HEK293 (cell line): ENCODE measurements at regions of chr19 and their contacts with region 1.

Region 1: DNA sequence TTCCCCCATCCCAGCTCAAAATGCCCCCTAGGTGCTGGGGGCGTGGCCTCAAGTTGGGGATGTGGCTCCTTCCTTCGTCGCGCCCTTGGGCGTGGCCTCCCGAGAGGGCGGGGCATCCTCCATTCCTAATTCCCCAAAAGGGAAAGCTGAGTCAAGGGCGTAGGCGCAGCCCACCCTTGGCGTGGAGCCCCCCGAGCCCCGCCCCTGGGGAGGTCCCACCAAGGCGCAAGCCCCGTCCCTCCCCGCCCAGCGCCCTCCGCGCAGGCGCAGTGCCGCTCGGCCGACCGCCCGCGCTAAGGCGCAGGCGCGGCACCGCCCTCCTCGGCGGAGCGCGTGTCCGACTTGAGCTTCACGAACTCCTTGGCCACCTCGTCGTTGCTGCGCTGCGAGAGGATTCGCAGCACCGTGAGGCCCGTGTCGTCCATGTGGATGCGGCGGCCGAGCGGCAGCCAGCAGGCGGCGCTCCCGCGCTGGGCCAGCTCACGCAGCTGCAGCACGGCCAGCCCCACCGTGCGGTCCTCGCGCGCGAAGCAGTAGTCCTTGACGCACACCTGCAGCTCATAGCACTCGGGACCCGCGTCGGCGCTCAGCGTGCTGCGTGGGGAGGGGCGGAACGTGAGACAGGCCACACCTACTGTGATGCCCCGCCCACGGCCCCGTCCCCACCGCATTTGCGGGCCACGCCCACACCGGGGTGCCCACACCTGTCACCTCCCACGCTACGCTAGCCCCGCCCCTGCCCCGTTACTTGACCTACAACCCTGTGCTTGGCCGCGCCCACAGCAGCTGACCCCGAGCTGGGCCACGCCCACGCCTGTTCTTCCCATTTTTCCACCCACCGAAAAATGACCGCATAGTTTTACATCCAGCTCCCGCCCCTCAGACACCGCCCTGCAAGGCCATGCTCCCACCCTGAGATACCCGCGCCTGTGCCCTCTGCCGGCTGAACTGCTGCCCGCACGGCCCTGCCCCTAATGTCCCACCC is 50.6 kb downstream of the COLGALT1 start:
- H3K4me3 ChIP-seq: peak overlapping the region; percentile 43
- H3K27ac ChIP-seq: peak overlapping the region; percentile 78; the same call in 1 of the 2 replicates
- H3K4me1 ChIP-seq: no peaks in the 10 kb centered on the region
- CTCF ChIP-seq: peak; percentile 98

Region 2: DNA sequence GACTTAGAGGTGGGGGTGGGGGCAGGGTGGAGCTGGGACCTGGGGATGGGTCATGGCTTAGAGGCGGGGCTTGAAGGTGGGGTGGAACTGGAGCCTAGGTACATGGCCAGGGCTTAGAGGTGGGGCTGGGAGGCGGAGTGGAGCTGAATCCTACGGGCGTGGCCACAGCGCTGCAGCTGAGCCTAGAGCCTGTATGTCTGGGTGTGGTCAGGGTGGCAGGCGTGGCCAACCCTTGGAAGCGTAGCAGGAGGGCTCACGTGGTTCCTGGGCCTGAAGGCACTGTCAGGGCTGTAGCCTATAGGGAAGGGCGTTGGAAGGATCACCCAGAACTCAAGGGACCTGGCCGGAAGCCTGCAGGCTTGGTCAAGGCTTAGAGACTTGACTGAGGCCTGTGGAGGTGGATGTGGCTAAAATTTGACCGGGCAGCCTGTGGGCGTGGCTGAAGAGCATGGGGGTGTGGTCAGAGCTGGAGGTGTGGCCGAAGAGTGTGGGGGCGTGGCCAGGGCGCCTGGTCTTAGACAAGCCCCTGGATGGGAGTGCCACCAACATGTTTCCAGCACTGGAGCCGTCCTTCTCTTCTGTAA is 26.3 kb before region 1 on chr19:
- CTCF ChIA-PET with region 1: interaction called, 5 read pairs
- POLR2A ChIA-PET with region 1: interaction called, 12 read pairs
- H3K4me3 ChIP-seq: no peak overlapping the region
- H3K27ac ChIP-seq: no peak overlapping the region
- H3K4me1 ChIP-seq: no peaks in the 10 kb centered on the region
- CTCF ChIP-seq: no peak

Region 3: DNA sequence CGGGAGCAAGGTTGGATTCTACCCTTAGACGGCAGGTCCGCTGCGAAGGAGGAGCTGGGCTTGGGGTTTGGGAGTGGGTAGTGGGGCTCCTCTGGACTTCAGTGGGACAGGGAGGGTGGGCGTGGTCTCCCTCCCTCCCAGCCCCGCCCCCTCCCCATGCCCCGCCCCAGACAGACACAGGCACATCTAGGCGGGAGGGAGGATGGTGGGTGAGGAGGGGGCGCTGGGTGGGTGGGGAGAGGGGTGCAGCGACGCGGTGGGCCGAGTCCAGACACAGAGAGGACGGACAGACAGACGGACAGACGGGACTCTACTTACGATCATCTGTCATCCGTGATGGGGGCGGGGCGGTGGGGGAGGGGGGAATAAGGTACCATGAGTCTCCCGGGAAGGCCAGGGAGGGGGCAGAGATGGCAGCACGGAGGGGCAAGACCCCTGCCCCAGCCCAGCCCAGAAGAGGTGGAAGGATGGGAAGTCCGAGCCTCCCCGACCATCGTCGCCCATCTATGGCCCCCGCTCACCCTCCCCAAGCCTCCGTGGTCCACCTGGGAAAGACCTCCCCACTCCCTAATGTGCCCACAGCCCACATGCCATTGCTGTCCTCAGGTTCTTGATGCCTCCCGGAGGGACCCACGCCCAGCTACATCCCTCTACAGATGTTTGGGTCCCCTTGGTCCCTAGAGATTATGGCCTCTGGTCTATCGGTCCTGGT is 17.3 kb after region 1 on chr19:
- CTCF ChIA-PET with region 1: interaction called, 31 read pairs
- POLR2A ChIA-PET with region 1: interaction called, 3 read pairs
- H3K4me3 ChIP-seq: no peak overlapping the region
- H3K27ac ChIP-seq: no peak overlapping the region
- H3K4me1 ChIP-seq: no peaks in the 10 kb centered on the region
- CTCF ChIP-seq: no peak

Region 4: DNA sequence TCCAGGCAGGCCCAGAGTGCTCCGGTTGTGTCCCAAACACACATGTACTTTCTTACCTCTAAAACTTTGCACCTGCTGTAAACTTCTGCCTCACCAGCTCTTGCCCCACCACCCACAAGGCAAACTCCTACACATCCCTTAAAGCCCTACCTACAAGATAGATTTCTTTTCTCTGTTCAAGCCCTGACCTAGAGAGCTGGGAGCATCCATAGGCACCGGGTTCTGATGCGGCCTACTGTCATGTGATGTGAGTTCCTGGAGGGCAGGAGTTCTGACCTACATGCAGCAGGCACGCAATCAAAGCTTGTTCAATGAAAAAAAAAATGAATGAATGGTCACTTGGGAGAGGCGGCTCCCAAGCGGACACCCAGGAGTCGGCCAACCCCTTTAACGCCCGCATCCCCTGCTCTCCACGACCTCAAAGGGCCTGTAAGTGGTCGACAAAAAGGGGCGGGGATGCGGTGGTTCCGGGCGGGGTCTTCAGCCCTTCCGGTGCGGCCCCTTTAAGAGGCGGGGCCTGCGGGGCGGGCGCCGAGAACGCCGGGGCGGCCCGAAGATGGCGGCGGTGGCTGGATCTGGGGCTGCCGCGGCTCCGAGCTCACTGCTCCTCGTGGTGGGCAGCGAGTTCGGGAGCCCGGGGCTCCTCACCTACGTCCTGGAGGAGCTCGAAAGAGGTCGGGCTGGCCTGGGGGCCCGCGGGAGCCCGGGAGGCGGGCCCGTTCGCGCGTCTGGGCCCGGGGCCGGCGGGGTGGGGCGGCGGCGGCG is 113.1 kb after region 1 on chr19 and contains the start of gene MAP1S:
- CTCF ChIA-PET with region 1: interaction called, 5 read pairs
- POLR2A ChIA-PET with region 1: interaction called, 10 read pairs
- H3K4me3 ChIP-seq: peak within 1 kb of the TSS; percentile 93
- H3K27ac ChIP-seq: peak within 1 kb of the TSS; percentile 50; the same call in 1 of the 2 replicates
- H3K4me1 ChIP-seq: peaks cover 6% of the 10 kb centered on the region
- CTCF ChIP-seq: no peak